ENCODE measurements at regions of chr4 and their contacts with region 1.

Region 1: GRCh38 chr4:161714022-161714751 is 449.6 kb downstream of the FSTL5 start:
- DNase-seq: no peak
- ATAC-seq: peak; percentile 91
- H3K4me3 ChIP-seq: no peak overlapping the region
- H3K27ac ChIP-seq: no peak overlapping the region
- H3K4me1 ChIP-seq: no peaks in the 10 kb centered on the region
- H3K27me3 ChIP-seq: no peaks in the 10 kb centered on the region
- CTCF ChIP-seq: no peak
- EP300 ChIP-seq: no peak; a peak in 1 of 4 replicates
- POLR2A ChIP-seq: no peak
- RAD21 ChIP-seq: no peak

Region 2: GRCh38 chr4:161702287-161702686 is 11.9 kb before region 1 on chr4:
- CTCF ChIA-PET with region 1: interaction called, 7 read pairs
- POLR2A ChIA-PET with region 1: no interaction called
- RAD21 ChIA-PET with region 1: no interaction called
- SMC1A ChIA-PET with region 1: interaction called, 16 read pairs
- in situ Hi-C with region 1: no loop called
- intact Hi-C with region 1: no loop called
- DNase-seq: no peak
- ATAC-seq: peak; percentile 43
- H3K4me3 ChIP-seq: no peak overlapping the region
- H3K27ac ChIP-seq: no peak overlapping the region
- H3K4me1 ChIP-seq: no peaks in the 10 kb centered on the region
- H3K27me3 ChIP-seq: no peaks in the 10 kb centered on the region
- CTCF ChIP-seq: peak in 2 of 3 experiments; percentile 17 to 34; a peak in 2 of 6 replicates
- EP300 ChIP-seq: no peak
- POLR2A ChIP-seq: no peak
- RAD21 ChIP-seq: no peak

Region 3: DNA sequence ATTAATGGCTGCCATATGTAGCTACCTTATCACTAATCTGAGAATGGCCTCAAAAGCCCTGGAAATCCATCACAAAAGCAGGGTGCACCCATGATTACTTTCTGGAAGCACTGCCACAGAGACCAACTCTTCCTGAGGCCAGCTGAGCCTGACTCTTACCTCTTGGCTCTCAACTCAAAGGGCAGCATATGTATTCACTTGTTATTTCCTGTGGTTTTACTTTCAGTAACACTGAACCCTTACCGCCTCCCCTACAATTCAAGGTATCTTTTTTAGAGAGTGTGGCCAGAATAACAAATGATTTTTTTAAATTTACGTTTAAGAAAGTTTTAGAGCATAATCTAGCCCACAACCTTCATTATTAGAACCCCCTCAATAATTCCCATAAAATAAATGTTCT is 14.7 kb after region 1 on chr4:
- CTCF ChIA-PET with region 1: interaction called, 5 read pairs
- POLR2A ChIA-PET with region 1: no interaction called
- RAD21 ChIA-PET with region 1: no interaction called
- SMC1A ChIA-PET with region 1: interaction called, 12 read pairs
- in situ Hi-C with region 1: no loop called
- intact Hi-C with region 1: no loop called
- DNase-seq: no peak
- ATAC-seq: peak; percentile 80
- H3K4me3 ChIP-seq: no peak overlapping the region
- H3K27ac ChIP-seq: no peak overlapping the region
- H3K4me1 ChIP-seq: no peaks in the 10 kb centered on the region
- H3K27me3 ChIP-seq: no peaks in the 10 kb centered on the region
- CTCF ChIP-seq: no peak
- EP300 ChIP-seq: no peak
- POLR2A ChIP-seq: no peak
- RAD21 ChIP-seq: no peak

Measured in GM12878 (cell line).